Activated T-helper 1 cell treated with anti-CD3 and anti-CD28 coated beads, Interleukin-12 subunit alpha, Interleukin-12 subunit beta, Interleukin-2, Interleukin-4 antibody, amounts not matched to agents 30 ng/mL and 10 ng/mL and 1 ng/mL, durations not matched to agents 14 hours and 24 hours and 36 hours (primary cell): ENCODE measurements at regions of chr2 and their contacts with region 1.

Region 1: GRCh38 chr2:217223222-217223930 is 363.5 kb upstream of the TNP1 start:
- DNase-seq: peak; percentile 56
- H3K4me3 Mint-ChIP-seq: peak overlapping the region; percentile 9
- H3K27ac Mint-ChIP-seq: peak overlapping the region; percentile 93
- H3K4me1 Mint-ChIP-seq: peaks cover 49% of the 10 kb centered on the region
- H3K27me3 Mint-ChIP-seq: peaks cover 10% of the 10 kb centered on the region

Region 2: DNA sequence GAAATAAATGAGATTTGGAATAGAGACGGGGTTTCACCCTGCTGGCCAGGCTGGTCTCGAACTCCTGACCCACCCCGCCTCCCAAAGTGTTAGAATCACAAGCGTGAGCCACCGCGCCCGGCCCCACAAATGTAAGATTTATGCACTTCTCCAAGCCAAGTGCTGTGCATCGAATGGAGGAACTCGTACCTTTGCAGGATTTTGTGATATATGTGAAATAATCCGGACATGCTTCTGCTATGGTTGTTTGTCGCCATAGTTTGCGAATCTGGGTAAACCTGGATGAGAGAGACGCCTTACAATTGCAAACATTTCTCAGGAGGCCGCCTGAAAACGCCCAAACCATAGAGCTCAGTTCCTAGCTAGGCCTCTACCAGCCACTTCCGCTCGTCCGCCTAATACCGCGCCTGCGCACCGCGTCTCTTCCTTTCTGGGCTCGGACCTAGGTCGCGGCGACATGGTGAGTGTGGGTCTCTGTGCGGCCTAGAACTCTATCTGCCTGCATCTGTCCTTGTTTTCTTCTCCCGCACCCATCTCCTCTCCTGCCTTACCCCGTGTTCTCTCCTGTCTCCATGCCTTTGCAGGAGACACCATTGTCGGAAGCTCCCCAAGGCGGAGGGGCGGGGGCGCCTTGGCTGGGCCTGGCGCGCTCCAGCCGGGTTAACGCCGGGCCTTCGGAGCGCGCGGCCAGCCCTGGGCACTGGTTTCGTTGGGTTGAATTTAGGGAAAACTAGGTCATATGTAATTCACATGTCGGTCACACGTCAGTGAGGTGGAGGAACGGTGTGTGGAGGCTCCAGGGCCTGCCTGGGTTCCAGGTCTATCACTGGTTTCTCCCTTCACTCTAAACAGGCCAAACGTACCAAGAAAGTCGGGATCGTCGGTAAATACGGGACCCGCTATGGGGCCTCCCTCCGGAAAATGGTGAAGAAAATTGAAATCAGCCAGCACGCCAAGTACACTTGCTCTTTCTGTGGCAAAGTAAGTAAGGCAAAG is 724.7 kb before region 1 on chr2 and contains the start of gene RPL37A:
- intact Hi-C with region 1: loop called (anchors 1 kb)
- DNase-seq: peak; percentile 87
- H3K4me3 Mint-ChIP-seq: peak within 1 kb of the TSS; percentile 93
- H3K27ac Mint-ChIP-seq: peak within 1 kb of the TSS; percentile 86
- H3K4me1 Mint-ChIP-seq: peaks cover 57% of the 10 kb centered on the region
- H3K27me3 Mint-ChIP-seq: no peaks in the 10 kb centered on the region
- total RNA-seq, gene RPL37A: 2,803 and 2,922 TPM in 2 replicates

Region 3: DNA sequence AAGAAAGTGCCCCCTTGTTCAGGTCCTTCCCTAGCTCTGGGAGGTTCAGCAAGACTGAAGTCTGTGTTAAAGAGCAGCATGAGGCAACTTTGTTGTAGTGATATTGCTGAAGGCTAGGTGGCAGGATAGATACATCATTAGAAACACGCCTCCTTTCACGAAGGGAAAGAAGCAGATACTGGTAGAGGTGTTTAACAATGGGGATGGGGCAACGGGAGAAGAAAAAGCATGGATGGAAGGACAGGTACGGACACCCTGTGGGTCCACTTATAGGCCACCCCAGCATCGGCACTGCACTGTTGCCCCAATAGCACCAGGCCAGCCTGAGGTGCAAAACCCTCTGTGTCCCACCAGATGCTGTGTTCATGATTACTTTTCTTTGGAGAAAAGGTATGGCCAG is 524.5 kb before region 1 on chr2:
- intact Hi-C with region 1: loop called (anchors 1 kb)
- DNase-seq: no peak
- H3K4me3 Mint-ChIP-seq: no peak overlapping the region
- H3K27ac Mint-ChIP-seq: no peak overlapping the region
- H3K4me1 Mint-ChIP-seq: peaks cover 3% of the 10 kb centered on the region
- H3K27me3 Mint-ChIP-seq: peaks cover 36% of the 10 kb centered on the region

Region 4: DNA sequence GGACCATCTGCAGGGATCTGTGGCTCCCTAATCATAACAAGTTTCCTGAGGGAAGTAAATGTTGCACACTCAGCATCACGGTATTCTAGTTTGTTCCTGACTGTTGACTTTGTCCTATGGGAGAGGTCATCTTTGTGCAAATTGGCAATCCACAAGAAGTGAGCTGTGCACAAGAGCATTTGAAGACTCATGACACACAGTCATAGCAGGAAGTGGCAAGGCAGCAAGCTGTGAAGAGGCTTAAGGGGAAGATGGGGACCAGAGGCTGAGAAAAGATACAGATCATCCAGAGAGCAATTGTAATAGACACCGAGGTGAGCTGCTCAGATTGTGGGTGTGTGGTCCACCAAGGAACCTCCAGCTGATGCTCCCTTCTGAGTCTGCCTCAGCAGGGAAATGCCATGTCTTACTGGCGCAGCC is 366.2 kb before region 1 on chr2:
- intact Hi-C with region 1: loop called (anchors 1 kb)
- DNase-seq: peak; percentile 22
- H3K4me3 Mint-ChIP-seq: no peak overlapping the region
- H3K27ac Mint-ChIP-seq: peak overlapping the region; percentile 34
- H3K4me1 Mint-ChIP-seq: peaks cover 52% of the 10 kb centered on the region
- H3K27me3 Mint-ChIP-seq: no peaks in the 10 kb centered on the region

Region 5: DNA sequence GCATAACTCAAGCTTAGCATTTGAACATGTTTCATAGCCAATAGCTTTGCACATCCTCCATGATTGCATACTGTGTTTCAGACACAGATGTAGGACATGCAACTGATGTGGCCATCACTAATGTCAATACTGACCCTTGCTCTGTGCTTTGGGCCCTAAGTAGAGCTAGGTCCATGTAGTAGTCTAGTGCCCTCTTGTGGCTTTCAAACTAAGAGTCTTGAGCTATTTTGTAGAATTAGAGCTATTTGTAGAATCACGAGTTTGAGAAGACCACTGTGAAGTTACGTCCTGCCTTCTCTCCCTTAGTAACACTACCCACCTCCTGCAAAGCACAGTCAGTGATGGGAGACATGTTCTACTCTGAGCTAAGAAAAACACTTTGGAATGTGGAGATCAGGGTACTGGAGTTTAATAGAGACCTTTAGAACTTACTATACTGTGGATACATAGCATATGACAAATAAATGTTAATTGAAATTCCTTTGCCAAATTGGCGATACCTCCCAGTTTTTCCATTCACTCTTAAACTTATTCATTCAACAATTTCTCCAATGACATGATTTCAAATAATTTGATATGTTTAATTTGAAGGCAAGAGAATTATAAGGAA is 57.0 kb before region 1 on chr2:
- intact Hi-C with region 1: loop called (anchors 2 kb)
- DNase-seq: no peak
- H3K4me3 Mint-ChIP-seq: no peak overlapping the region
- H3K27ac Mint-ChIP-seq: no peak overlapping the region
- H3K4me1 Mint-ChIP-seq: peaks cover 17% of the 10 kb centered on the region
- H3K27me3 Mint-ChIP-seq: peaks cover 2% of the 10 kb centered on the region

Region 6: DNA sequence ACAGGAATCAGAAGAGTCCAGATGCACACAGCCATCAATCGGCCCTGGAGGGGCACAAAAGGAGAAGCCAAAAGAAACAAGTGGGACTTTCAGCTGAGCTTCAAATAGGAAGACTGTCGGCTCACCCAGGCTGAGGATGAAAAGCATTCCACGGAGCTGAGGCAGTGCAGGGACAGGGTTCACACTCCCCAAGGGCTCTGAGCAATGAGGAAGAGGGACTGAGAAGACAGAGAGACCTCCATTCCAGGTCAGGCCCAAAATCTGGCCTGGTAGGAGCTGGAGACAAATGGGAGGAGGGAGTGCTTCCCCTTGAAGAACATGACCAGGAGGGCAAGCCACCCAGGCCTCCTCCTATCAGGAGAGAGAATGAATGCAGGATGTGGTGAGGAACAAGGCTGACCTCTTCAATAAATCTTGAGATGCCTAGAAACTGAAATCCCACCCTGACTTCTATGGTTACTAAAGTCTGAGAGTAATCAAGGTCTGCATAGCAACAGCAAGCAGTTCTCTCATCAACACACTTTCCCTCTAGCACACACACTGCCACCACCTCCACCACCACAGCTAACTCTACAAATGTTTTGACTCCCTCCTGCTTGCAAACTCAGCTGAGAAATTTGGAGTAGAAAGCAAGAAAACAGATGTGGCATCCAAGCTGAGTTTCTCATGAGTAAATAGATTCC is 345.1 kb after region 1 on chr2:
- intact Hi-C with region 1: no loop called
- DNase-seq: no peak
- H3K4me3 Mint-ChIP-seq: no peak overlapping the region
- H3K27ac Mint-ChIP-seq: no peak overlapping the region
- H3K4me1 Mint-ChIP-seq: no peaks in the 10 kb centered on the region
- H3K27me3 Mint-ChIP-seq: peaks cover 2% of the 10 kb centered on the region

Region 7: GRCh38 chr2:217713395-217714286 is 490.3 kb after region 1 on chr2:
- intact Hi-C with region 1: no loop called
- DNase-seq: peak; percentile 48
- H3K4me3 Mint-ChIP-seq: no peak overlapping the region
- H3K27ac Mint-ChIP-seq: no peak overlapping the region
- H3K4me1 Mint-ChIP-seq: no peaks in the 10 kb centered on the region
- H3K27me3 Mint-ChIP-seq: no peaks in the 10 kb centered on the region

Region 8: DNA sequence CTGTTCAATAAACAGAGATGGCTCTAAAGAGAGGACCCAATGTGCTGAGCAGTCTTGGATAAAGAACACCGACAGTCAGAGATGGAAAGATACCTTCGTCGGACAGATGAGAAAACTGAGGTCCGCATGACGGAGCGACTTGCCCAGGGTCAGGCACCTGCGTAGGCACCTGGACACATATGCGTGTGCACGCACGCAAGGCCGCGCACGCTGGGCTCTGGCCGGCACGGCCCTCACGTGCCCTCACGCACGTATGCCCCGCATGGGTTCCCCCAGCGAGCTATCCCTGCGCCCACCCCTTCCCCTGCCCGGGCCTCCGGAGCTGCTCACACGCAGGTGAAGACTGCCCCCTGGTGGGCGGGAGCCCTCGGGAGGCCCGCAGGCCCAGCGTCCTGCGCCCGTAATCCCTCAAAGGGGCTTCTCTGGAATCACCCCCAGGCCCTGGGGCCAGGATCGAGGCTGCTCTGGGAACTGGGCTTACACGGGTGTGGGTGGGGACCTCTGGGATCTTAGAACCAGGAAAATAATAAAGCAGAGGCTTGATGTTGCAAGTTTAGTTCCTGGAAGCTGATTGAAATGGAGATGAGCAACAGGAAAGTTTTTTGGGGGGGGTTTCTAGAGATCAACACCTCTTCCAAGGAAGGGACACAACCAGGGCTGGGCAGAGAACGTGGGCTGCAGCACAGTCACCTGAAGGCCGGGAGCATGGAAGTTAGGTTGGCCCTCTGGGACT is 533.2 kb after region 1 on chr2:
- intact Hi-C with region 1: loop called (anchors 2 kb)
- DNase-seq: peak; percentile 39
- H3K4me3 Mint-ChIP-seq: no peak overlapping the region
- H3K27ac Mint-ChIP-seq: peak overlapping the region; percentile 63
- H3K4me1 Mint-ChIP-seq: peaks cover 21% of the 10 kb centered on the region
- H3K27me3 Mint-ChIP-seq: peaks cover 2% of the 10 kb centered on the region

Region 9: GRCh38 chr2:218168635-218169462 is 945.5 kb after region 1 on chr2:
- intact Hi-C with region 1: no loop called
- DNase-seq: peak; percentile 32
- H3K4me3 Mint-ChIP-seq: no peak overlapping the region
- H3K27ac Mint-ChIP-seq: no peak overlapping the region
- H3K4me1 Mint-ChIP-seq: peaks cover 35% of the 10 kb centered on the region
- H3K27me3 Mint-ChIP-seq: peaks cover 31% of the 10 kb centered on the region